Psoas muscle (tissue), 8 donors: ENCODE measurements at regions of chr19 and their contacts with region 1.

Region 1: GRCh38 chr19:46068345-46069258 is 27.8 kb upstream of the IGFL4 start:
- DNase-seq: no peak
- ATAC-seq: no peak
- H3K4me3 ChIP-seq: no peak overlapping the region
- H3K27ac ChIP-seq: no peak overlapping the region
- H3K4me1 ChIP-seq: no peaks in the 10 kb centered on the region
- H3K27me3 ChIP-seq: peaks cover 2 to 56% (median 4%) of the 10 kb centered on the region in 3 donors
- CTCF ChIP-seq: no peak

Region 2: DNA sequence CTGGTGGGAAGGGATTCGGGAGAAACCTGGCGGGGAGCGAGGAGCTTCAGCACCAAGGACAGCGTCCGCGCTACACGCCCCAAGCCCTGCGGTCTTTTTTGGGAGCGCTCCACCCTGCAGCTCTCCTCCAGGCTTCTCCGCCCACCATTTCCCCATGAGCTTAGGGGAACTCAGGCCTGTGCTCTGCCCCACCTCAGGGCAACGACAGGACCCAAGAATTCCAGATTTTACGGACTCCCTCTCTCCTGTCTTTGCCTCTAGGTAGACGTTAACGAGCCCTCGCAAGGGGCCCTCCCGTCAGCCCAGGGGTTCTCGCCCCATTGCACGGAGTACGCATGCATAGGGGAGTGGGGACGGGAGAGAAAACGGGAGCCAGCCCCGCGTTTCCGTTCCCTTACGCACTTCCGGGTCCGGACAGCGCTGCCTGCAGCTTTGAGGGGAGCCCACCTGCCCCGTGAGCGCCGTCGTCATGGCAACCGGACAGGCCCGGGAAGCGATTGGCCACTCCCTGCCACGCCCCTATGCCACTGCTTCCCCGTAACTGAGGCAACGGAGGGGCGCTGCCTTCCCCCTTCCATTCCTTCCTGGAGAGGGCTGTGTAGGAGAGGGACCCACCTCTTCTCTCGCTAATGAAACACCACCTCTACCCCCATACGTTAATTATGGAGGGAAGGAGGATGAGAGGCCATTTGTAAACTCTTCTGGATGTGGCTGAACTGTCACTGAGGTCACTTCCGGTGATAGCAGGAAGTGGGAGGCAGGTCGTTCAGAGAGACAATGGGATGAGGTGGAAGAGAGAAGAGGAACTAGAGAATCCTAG is 115.7 kb before region 1 on chr19:
- intact Hi-C with region 1: no loop called
- DNase-seq: peak; percentile 47 to 65
- ATAC-seq: peak; percentile 42 to 62 (median 60)
- H3K4me3 ChIP-seq: peak overlapping the region; percentile 22
- H3K27ac ChIP-seq: no peak overlapping the region
- H3K4me1 ChIP-seq: no peaks in the 10 kb centered on the region
- H3K27me3 ChIP-seq: peaks cover 0 to 51% (median 3%) of the 10 kb centered on the region in 3 donors
- CTCF ChIP-seq: no peak

Region 3: DNA sequence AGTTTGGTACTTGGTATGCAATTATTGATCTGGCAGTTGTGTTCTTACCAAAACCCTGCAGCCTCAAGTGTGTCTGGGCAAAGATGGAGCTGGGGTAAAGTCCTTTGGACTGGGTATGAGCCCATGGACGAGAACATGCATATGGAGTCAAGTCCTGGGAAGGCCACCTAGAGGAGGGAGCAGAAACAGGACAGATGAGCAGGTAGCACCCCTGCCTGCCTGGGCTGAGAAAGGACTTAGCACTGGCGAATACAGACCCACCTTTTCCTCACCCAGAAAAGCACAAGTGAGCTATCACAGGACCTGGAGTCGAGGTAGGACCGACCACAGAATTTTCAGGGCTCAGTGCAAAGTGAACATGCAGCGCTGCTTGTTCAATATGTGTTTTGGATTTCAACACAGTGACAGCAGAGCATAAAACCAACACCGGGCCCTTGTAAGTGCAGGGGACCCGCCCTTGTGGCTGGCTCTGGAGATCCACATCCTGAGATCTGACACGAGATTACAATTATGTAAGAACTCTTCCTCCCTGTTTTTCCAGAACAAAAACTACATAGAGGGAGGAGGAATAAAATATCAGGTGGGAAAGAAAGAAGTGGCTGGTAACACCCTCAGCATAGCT is 105.4 kb after region 1 on chr19:
- intact Hi-C with region 1: no loop called
- DNase-seq: no peak
- ATAC-seq: no peak
- H3K4me3 ChIP-seq: no peak overlapping the region
- H3K27ac ChIP-seq: no peak overlapping the region
- H3K4me1 ChIP-seq: no peaks in the 10 kb centered on the region
- H3K27me3 ChIP-seq: peaks cover 0 to 12% (median 2%) of the 10 kb centered on the region in 3 donors
- CTCF ChIP-seq: no peak

Region 4: DNA sequence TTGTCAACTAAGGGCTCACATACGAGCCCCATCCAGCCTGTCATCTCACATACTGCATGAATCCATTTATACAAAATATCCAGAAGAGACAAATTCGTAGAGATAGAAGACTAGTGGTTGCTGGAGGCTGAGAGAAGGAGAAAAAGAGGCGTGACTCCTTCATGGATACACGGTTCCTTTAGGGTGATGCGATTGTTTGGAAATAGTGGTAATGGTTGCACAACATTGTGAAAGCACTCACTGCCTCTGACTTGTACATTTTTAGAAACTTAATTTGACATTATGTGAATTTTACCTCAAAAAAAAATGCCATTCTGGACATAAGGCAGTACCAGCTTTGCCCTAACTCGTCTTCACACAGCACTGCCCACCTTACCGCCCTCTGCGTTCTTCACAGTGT is 188.3 kb after region 1 on chr19:
- intact Hi-C with region 1: loop called in 1 of 2 experiments (anchors 10 kb)
- DNase-seq: no peak
- ATAC-seq: no peak
- H3K4me3 ChIP-seq: no peak overlapping the region
- H3K27ac ChIP-seq: no peak overlapping the region
- H3K4me1 ChIP-seq: no peaks in the 10 kb centered on the region
- H3K27me3 ChIP-seq: peaks cover 0 to 37% (median 4%) of the 10 kb centered on the region in 3 donors
- CTCF ChIP-seq: no peak